Dorsolateral prefrontal cortex (tissue), 120 donors: ENCODE measurements at regions of chr3 and their contacts with region 1.

Region 1: DNA sequence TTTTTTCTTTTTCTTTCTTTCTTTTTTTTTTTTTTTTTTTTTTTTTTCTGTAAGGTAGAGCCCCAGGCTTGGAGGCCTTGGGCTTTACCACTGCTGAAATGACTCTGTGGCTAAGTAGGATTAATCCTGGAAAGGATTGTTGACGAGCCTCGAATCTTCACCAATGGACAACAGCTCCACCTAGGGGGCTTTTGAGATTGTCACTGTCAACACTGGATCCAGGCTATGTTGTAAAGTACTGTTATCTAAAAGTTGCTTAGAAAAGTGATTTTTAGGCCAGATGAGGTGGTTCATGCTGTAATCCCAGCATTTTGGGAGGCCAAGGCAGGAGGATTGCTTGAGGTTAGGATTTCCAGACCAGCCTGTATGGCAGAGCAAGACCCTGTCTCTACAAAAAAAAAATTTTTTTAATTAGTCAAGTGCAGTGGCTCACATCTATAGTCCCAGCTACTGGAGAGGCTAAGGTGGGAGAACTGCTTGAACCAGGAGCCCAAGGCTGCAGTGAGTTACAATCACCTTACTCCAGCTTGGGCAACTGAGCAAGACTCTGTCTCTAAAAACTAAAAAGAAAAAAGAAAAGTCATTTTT is 41.6 kb downstream of the KLHL18 start:
- DNase-seq: peak in 7 of 10 donors; percentile 40 to 73 (median 57)
- H3K4me3 ChIP-seq: no peak overlapping the region
- H3K27ac ChIP-seq: peak overlapping the region in 1 of 59 donors; percentile 69
- H3K27me3 ChIP-seq: no peaks in the 10 kb centered on the region
- CTCF ChIP-seq: peak; percentile 42 to 85 (median 76)

Region 2: DNA sequence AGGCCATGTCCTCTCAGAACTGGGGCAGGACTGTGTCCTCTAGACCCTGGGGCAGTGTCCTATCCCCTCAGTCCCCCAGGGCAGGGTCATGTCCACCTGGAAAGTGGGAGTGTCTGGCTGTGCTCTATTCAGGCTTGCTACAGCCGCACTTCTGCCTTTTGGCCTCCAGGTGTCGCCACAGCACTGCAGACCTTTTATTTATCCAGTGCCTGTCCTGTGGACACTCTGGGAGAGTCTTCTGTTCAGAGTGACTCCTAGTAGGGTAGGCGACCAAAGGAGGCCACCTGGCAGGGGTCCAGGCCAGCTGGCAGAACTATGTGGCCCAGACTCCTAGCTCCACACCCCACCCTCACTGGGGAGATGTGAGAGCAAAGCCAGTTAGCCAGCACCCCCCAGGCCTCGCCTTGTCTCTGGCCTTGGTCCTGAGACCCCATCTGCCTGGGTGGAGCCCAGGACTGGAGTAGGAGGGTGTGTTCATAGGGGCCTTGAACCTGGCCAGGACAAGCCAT is 619.3 kb before region 1 on chr3:
- intact Hi-C with region 1: loop called in 1 of 2 experiments (anchors 2 kb)
- DNase-seq: peak; percentile 57 to 86 (median 80)
- H3K4me3 ChIP-seq: no peak overlapping the region
- H3K27ac ChIP-seq: no peak overlapping the region
- H3K27me3 ChIP-seq: peaks cover 0 to 5% (median 0%) of the 10 kb centered on the region in 45 donors
- CTCF ChIP-seq: peak; percentile 86 to 100 (median 97)

Region 3: GRCh38 chr3:46923559-46924350 is 400.6 kb before region 1 on chr3:
- intact Hi-C with region 1: loop called in 1 of 2 experiments (anchors 5 kb)
- DNase-seq: peak in 5 of 10 donors; percentile 22 to 59 (median 42)
- H3K4me3 ChIP-seq: no peak overlapping the region
- H3K27ac ChIP-seq: peak overlapping the region in 1 of 59 donors; percentile 22
- H3K27me3 ChIP-seq: no peaks in the 10 kb centered on the region
- CTCF ChIP-seq: peak in 55 of 56 donors; percentile 22 to 80 (median 70)

Region 4: DNA sequence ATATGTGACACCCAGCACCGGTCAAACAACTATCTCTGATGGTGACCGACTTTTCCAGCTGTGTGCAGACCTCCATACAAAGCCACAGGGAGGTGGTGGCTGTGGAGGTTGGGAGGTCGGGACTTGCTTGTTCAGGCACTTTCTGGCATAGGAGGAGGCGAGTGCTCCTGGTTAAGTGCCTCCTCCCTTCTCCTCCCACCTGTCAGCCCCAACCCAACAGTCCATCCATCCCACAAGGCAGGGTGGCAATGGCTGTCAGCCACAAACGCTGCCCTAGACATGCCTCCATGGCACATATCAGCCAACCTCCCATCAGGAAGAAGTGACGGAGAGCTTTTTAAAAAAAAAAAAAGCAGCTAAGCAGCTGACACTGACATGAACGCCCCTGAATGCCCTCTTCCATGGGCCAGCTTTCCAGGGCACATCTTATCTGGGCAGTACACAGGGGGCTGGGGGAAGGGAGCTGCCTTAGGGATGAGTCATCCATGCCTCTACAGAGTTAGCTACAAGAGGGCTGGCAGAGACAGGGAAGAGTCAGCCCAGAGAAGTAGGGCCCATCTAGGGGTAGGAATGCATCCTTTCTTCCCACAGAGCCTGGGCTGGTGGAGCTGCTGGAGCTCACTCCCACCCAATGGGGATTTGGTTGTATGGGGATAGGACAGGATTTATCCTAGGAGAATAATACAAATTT is 389.1 kb before region 1 on chr3:
- intact Hi-C with region 1: loop called in 1 of 2 experiments (anchors 5 kb)
- DNase-seq: peak in 5 of 10 donors; percentile 42 to 76 (median 55)
- H3K4me3 ChIP-seq: no peak overlapping the region
- H3K27ac ChIP-seq: peak overlapping the region in 37 of 59 donors; percentile 4 to 77 (median 44)
- H3K27me3 ChIP-seq: no peaks in the 10 kb centered on the region
- CTCF ChIP-seq: peak in 5 of 56 donors; percentile 6 to 35 (median 20)

Region 5: DNA sequence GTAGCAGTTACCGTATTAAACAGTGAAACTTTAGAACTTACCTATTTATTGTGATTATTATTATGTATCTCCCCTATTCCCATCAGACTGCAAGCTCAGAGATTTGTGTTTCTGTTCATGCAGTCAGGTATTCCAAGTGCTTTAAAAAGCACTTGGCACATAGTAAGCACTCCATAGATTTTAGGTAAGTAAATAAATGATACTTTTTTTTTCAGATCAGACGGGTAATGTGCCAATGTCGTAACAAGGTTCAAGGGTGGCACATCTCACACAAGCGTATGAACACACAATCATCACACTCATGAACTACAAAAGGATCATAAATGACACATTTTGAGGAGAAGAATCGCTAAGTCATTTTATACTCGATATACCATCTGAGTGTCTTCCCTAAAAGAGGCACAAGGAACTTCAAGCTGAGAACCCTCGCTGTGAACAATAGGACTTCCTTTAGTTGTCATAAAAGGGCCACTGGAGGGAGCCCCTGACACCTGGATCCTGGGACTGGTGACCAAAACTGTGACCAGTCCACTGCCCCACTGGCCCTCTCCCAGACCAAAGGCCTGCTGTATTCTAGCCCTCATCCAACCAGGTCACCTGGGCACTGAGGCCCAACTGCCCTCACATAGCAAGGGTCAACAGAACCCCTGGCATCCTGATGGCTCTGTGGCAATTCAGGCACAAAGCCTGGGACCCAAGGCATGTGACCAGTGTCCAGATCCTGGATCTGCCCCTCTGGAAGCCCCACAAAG is 73.9 kb before region 1 on chr3:
- intact Hi-C with region 1: loop called in 1 of 2 experiments (anchors 5 kb)
- DNase-seq: peak in 1 of 10 donors; percentile 25
- H3K4me3 ChIP-seq: no peak overlapping the region
- H3K27ac ChIP-seq: no peak overlapping the region
- H3K27me3 ChIP-seq: no peaks in the 10 kb centered on the region
- CTCF ChIP-seq: peak in 50 of 56 donors; percentile 17 to 66 (median 38)

Region 6: DNA sequence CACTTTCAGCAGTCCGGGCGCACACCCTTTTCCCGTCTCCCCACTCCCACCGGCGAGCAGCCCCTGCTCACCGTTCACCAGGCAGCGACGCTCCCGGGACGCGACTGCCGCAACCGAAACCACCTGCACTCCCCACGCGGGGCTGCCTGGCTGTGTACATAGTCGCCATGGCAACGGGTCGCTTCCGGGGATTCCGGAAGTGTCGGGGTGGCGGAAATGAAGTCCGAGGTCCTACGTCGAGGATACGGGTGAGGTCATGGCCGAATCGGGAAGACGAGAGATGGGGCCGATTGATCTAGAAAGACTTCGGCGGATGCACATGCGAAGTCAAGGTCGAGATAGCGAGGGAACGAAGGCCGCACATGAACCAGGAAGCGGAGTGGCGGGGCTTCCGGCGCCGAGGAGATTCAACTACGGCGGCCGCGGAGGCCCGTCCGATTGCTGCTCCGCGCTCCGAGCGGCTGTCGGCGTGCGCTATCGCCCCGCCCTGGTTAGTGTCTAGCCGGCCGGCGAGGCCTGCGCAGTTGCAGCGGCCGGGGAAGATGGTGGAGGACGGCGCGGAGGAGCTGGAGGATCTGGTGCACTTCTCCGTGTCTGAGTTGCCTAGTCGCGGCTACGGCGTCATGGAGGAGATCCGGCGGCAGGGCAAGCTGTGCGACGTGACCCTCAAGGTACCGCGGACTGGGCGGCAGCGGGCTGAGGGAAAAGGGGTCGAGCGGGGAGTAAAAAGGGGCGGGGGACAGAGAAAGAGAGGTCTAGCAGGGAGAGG is 41.8 kb before region 1 on chr3 and contains the starts of genes KIF9 and KLHL18:
- intact Hi-C with region 1: loop called in 1 of 2 experiments (anchors 5 kb)
- DNase-seq: peak; percentile 89 to 95 (median 94)
- H3K4me3 ChIP-seq: peak within 1 kb of the TSS; percentile 68 to 99 (median 87)
- H3K27ac ChIP-seq: peak within 1 kb of the TSS; percentile 63 to 99 (median 94)
- H3K27me3 ChIP-seq: no peaks in the 10 kb centered on the region
- CTCF ChIP-seq: peak in 46 of 56 donors; percentile 14 to 70 (median 39)
- total RNA-seq, gene KIF9: 3.1 to 15.9 (median 8.8) TPM
- total RNA-seq, gene KLHL18: 19.8 to 62.3 (median 38.0) TPM